ENCODE measurements at regions of chr17 and their contacts with region 1.

Region 1: DNA sequence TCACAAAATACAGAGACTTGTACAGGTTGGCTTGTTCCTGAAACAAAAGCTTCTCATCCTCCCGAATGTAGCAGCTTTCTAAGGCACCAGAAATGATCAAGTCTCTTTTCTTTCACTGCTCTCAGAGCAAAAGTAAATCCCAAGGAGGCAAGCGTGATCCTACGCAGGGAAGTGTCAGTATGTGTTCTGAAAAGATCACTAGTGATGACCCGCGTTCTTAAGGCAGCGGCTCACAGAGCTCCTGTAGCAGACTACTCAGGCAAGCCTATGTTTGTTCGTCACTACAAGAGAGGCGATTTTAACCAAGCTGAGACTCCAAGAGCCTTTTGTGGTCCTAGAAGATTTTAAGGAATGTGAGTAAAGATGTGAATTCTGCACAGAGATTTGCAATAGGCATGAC is 34.5 kb downstream of the WIPI1 start:
- DNase-seq: no peak
- H3K4me3 ChIP-seq: no peak overlapping the region
- H3K27ac ChIP-seq: no peak overlapping the region
- H3K4me1 ChIP-seq: peaks cover 11% of the 10 kb centered on the region
- H3K27me3 ChIP-seq: no peaks in the 10 kb centered on the region
- CTCF ChIP-seq: no peak

Region 2: GRCh38 chr17:67509390-67510289 is 913.2 kb before region 1 on chr17:
- CTCF ChIA-PET with region 1: interaction called, 13 read pairs
- POLR2A ChIA-PET with region 1: no interaction called
- intact Hi-C with region 1: no loop called
- DNase-seq: no peak
- H3K4me3 ChIP-seq: no peak overlapping the region
- H3K27ac ChIP-seq: no peak overlapping the region
- H3K4me1 ChIP-seq: no peaks in the 10 kb centered on the region
- H3K27me3 ChIP-seq: no peaks in the 10 kb centered on the region
- CTCF ChIP-seq: no peak

Region 3: DNA sequence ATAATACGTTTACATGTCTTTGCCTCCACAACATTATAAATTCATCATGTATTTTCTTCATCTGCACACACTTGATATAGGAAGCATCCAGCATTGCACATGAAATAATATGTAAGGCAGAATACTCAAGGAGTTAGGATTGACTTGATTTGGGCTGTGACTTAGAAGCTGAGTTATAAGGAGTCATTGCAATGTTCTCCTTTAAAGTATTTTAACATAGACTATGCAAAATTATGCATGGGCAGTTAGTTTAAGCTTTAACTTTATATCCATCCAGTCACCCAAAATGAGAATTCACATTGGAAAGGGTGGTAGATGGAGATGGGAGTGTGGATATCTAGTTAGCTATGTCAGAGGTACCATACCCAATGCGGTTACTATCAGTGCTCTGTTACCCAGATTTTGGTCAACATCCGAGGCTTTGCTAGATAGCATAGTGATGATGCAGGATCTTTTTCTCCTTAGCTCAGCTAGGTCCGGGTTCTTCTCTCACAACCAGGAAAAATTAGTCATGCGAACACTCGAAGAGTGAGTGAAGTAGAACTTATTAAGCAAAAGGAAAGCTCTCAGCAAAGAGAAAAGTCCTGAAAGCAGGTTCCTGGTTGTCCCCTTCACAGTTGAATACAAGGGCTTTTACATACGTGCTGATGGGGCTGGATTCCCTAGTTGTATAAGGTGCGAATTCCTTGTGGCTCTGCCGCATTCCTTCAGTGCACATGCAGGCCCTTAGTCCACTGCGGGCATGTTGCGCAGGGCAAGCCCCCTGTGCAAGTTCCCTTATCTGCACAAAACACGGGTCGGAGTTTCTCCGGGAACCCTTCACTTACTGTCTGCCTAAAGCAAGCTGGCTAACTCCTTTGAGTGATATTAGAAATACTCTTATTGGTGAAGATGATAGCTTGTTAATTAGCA is 251.5 kb after region 1 on chr17:
- CTCF ChIA-PET with region 1: no interaction called
- POLR2A ChIA-PET with region 1: no interaction called
- intact Hi-C with region 1: no loop called
- DNase-seq: no peak
- H3K4me3 ChIP-seq: no peak overlapping the region
- H3K27ac ChIP-seq: no peak overlapping the region
- H3K4me1 ChIP-seq: no peaks in the 10 kb centered on the region
- H3K27me3 ChIP-seq: peaks cover 90% of the 10 kb centered on the region
- CTCF ChIP-seq: no peak

Measured in PC-9 (cell line).